ENCODE measurements at regions of chr3 and their contacts with region 1.

Region 1: GRCh38 chr3:71247221-71247976 is 336.1 kb downstream of the FOXP1 start:
- DNase-seq: no peak
- H3K4me3 ChIP-seq: no peak overlapping the region
- H3K27ac ChIP-seq: peak overlapping the region; percentile 61 to 86 (median 81)
- H3K4me1 ChIP-seq: peaks cover 37 to 74% (median 71%) of the 10 kb centered on the region in 4 donors
- H3K27me3 ChIP-seq: no peaks in the 10 kb centered on the region
- CTCF ChIP-seq: peak in 2 of 3 experiments; percentile 7 to 16
- EP300 ChIP-seq: no peak
- POLR2A ChIP-seq: no peak

Region 2: GRCh38 chr3:70899816-70900215 is 347.6 kb before region 1 on chr3:
- intact Hi-C with region 1: no loop called
- DNase-seq: no peak
- H3K4me3 ChIP-seq: no peak overlapping the region
- H3K27ac ChIP-seq: no peak overlapping the region
- H3K4me1 ChIP-seq: no peaks in the 10 kb centered on the region
- H3K27me3 ChIP-seq: no peaks in the 10 kb centered on the region
- CTCF ChIP-seq: no peak
- EP300 ChIP-seq: no peak
- POLR2A ChIP-seq: no peak

Region 3: GRCh38 chr3:71130471-71131374 is 116.7 kb before region 1 on chr3:
- intact Hi-C with region 1: loop called (anchors 5 kb)
- DNase-seq: peak; percentile 94
- H3K4me3 ChIP-seq: peak overlapping the region; percentile 44 to 60 (median 57)
- H3K27ac ChIP-seq: peak overlapping the region; percentile 80 to 91 (median 82)
- H3K4me1 ChIP-seq: peaks cover 55 to 78% (median 74%) of the 10 kb centered on the region in 4 donors
- H3K27me3 ChIP-seq: no peaks in the 10 kb centered on the region
- CTCF ChIP-seq: no peak
- EP300 ChIP-seq: no peak
- POLR2A ChIP-seq: no peak

Region 4: DNA sequence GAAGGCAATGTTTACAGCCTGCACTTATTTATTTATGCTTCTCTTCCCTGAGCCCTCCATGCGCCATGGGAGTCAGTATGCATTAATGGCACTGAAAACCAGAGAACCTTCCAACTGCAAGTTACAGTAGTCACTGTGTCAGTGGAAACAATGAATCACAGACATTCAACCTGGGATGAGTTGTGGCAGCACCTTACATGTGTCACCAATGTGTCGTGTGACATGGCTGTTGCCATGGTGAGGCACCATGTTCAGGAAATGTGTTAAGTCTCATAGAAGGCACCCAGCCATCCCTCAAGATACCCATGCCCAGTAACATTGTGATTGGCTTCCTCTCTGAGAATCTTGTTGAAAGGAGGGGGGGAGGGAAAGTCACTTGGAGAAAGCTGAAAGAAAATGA is 231.2 kb after region 1 on chr3:
- intact Hi-C with region 1: no loop called
- DNase-seq: no peak
- H3K4me3 ChIP-seq: no peak overlapping the region
- H3K27ac ChIP-seq: no peak overlapping the region
- H3K4me1 ChIP-seq: peaks cover 0 to 20% (median 14%) of the 10 kb centered on the region in 4 donors
- H3K27me3 ChIP-seq: no peaks in the 10 kb centered on the region
- CTCF ChIP-seq: no peak
- EP300 ChIP-seq: no peak
- POLR2A ChIP-seq: no peak